ENCODE measurements at regions of chr6 and their contacts with region 1.

Region 1: DNA sequence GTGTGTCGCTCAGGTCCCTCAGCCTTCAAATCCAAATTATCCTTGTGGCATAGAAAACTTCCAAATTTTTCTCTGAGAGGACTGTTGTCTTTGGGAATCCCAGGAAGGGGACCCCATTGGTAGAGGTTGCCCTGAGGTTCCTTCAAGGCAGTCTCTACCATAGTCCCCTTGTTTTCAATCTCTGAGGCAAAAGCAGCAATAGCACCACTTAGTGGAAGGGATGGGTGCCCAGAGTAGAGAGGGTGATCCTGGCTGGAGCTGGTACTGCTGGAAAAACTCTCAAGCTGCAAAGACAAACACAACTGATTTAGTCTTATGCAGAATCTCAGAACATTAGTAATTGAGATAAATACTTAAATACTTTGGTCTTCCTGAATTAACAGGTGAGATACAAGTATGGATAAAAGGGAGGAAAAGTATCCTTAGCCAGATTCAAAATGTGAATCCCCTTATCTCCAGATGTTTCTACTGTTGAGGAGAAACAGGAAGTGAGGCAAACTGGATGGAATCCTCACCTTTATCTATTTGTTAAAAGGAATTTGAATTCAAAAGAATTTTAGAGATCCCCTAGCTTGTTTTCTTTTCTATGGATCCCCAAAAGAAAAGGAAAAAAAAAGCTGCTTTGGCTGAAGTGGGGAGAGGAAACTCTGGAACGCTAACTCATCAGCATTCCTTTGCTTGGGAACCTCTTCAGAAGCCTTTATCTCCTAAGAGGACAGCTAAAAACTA is 13.4 kb downstream of the ZNF318 start:
- DNase-seq: peak in 2 of 4 experiments; percentile 21 to 22
- ATAC-seq: peak; percentile 75
- H3K4me3 ChIP-seq: no peak overlapping the region
- H3K27ac ChIP-seq: no peak overlapping the region
- H3K4me1 ChIP-seq: no peaks in the 10 kb centered on the region
- H3K27me3 ChIP-seq: no peaks in the 10 kb centered on the region
- CTCF ChIP-seq: peak; percentile 37 to 45 (median 39); a peak in 5 of 6 replicates
- EP300 ChIP-seq: no peak
- POLR2A ChIP-seq: no peak
- RAD21 ChIP-seq: peak in 1 of 2 experiments; percentile 35; a peak in 2 of 4 replicates

Region 2: DNA sequence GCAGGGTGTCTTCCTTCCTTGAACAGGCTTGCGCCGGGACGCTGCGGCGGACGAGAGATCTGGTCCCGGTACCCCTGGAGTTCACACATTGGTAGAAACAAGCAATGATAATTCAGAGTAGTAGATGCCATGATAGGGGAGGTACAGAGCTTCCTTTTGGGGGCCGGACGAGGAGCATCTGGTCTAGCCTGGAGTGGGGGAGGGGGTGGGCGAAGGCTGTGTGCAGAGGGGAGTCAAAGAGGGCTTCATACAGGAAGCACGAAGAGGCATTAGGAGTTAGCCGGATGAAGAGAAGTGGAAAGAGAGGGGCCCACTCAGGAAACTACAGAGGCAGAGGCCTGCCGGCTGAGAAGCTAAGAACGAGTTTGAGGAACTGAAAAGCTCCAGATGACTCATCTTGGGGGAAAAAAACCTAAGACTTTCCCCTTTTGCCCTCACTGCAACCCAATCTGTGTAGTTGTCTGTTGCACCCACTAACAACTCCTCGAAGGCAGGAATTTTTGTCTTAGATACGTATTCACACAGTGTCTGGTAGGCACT is 426.1 kb before region 1 on chr6:
- CTCF ChIA-PET with region 1: no interaction called
- POLR2A ChIA-PET with region 1: no interaction called
- in situ Hi-C with region 1: no loop called
- intact Hi-C with region 1: no loop called
- DNase-seq: peak in 2 of 4 experiments; percentile 50 to 70
- ATAC-seq: peak; percentile 12
- H3K4me3 ChIP-seq: peak overlapping the region; percentile 76
- H3K27ac ChIP-seq: peak overlapping the region; percentile 90
- H3K4me1 ChIP-seq: peaks cover 15 to 25% of the 10 kb centered on the region in 2 experiments; a peak in 4 of 5 replicates
- H3K27me3 ChIP-seq: no peaks in the 10 kb centered on the region
- CTCF ChIP-seq: no peak
- EP300 ChIP-seq: no peak
- POLR2A ChIP-seq: no peak; the same call in 1 of the 2 replicates
- RAD21 ChIP-seq: peak; percentile 0 to 1; a peak in 1 of 4 replicates

Region 3: DNA sequence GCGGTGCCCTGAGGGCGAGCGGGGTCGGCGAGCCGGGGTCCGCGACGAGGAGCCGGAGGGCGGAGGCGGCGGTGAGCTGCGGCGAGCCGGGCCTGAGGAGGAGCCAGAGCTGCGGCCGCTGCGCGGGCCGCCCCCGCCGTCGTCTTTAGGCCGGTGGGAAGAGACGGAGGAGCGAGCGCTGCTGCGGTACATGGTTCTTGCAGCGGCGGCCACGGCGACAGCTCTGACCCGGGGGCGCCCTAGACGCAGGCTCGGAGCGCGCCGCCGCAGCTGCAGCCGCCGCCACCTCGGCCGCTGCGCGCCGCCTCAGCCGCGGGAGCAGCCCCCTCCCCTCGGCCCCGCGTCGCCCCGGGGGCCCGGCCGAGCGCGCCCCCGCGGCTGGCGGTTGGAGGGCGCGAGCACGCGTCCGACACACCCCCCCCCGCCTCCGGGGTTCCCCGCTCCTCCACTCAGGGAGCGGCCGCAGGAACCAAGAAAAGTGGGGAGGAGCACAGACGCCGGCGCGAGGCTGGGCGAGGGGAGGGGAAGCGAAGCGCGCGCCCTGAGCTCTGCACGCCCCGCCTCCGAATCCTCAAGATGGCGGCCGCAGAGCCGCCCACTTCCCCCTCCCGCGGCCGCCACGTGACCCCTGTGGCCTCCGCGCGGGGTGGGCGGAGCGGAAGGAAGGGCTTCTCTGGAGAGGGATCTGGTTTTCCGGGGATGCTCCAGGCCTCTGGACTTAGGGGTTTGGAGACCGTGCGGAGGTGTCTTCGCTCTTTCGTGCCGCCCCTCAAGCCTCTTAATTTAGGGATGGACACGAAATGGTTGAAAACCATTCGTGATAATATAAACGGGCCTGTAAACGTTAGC is 13.4 kb after region 1 on chr6 and contains the start of gene ZNF318:
- CTCF ChIA-PET with region 1: no interaction called
- POLR2A ChIA-PET with region 1: interaction called, 14 read pairs
- in situ Hi-C with region 1: no loop called
- intact Hi-C with region 1: no loop called
- DNase-seq: peak; percentile 95 to 99 (median 98)
- ATAC-seq: peak; percentile 97
- H3K4me3 ChIP-seq: peak within 1 kb of the TSS; percentile 71
- H3K27ac ChIP-seq: peak within 1 kb of the TSS; percentile 82
- H3K4me1 ChIP-seq: peaks cover 18 to 23% of the 10 kb centered on the region in 2 experiments; a peak in 4 of 5 replicates
- H3K27me3 ChIP-seq: no peaks in the 10 kb centered on the region
- CTCF ChIP-seq: no peak
- EP300 ChIP-seq: no peak
- POLR2A ChIP-seq: peak; percentile 78
- RAD21 ChIP-seq: no peak
- polyA plus RNA-seq, gene ZNF318: 3.2 to 3.6 TPM

Region 4: DNA sequence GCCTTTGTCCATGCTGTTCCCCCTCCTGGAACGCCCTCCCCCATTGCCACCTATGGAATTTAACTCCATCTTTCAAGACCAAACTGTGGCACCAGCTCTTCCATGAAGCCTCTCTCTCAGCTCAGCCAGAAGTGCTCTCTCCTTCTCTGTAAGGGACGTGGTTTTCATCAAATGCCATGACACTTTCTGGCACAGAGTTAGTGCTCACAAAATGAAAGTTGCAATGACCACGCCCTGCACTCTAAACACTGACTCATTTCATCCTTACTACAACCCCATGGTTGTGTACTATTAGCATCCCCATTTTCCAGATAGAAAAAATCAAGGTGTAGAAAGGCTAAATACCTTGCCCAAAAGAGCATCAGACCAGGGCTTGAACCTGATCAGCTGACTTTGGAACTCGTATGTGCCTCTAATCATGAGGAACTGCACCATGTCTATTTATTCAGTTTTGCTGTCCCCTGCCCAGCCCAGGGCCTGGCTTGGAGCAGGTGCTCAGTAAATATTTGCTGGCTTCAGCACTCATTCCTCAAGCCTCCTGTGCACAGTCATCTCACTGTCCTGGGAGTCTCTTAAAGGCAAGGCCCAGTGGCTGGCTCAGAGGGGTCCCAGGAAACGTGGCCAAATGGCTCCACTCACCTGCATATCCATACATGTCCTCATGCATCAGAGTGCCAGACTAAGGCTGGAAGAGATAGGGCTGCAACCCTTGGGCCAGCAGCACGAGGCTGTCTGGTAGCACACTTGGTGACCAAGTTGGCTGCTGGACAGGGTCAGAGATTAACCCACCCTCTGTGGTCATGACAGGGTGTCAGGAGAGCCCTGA is 693.4 kb after region 1 on chr6:
- CTCF ChIA-PET with region 1: no interaction called
- POLR2A ChIA-PET with region 1: no interaction called
- in situ Hi-C with region 1: no loop called
- intact Hi-C with region 1: no loop called
- DNase-seq: no peak
- ATAC-seq: peak; percentile 20; the same call in 2 of the 3 replicates
- H3K4me3 ChIP-seq: no peak overlapping the region
- H3K27ac ChIP-seq: no peak overlapping the region
- H3K4me1 ChIP-seq: peaks cover 21 to 53% of the 10 kb centered on the region in 2 experiments
- H3K27me3 ChIP-seq: no peaks in the 10 kb centered on the region; a peak in 1 of 5 replicates
- CTCF ChIP-seq: no peak
- EP300 ChIP-seq: no peak
- POLR2A ChIP-seq: no peak
- RAD21 ChIP-seq: no peak